Left cardiac atrium (tissue), 4 donors: ENCODE measurements at regions of chr1 and their contacts with region 1.

Region 1: DNA sequence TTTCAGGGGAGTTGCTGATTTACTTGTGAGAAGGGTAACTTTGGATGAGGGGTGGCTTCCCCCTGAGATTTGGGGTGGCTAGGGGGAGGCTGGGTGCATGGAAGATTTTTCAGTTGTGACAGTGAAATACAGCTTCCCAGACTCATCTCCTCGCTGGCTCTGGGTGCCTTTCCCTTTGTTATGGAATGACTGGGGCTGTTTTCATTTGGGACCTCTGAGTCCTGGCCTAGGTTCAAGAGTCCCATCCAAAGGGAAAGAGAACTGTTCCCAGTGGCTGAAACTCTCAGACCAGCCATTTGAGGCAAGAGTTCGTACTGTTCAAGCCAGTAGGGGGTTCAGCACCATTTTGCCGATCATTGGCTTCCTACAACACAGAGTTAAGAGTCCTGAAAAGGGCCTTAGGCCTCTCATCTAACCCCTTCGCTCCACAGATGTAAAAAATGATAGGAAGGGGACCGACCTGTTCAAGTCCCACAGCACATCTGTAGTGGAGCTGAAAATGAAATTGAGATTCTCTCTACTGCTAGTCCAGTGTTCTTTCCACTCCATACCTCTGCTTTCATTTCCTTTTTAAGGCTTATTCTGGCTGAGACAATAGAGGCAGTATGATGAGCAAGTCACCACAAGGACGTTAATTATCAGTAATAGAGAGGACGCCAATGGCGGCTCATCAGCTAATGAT is 958 bp downstream of the DDR2 start:
- DNase-seq: no peak
- ATAC-seq: peak; percentile 40 to 62

Region 2: GRCh38 chr1:162689745-162690671 is 56.8 kb after region 1 on chr1:
- intact Hi-C with region 1: loop called in 1 of 2 experiments (anchors 5 kb)
- DNase-seq: no peak
- ATAC-seq: peak; percentile 24 to 46